ENCODE measurements at regions of chr10 and their contacts with region 1.

Region 1: GRCh38 chr10:88791924-88792323 is 10.6 kb upstream of the LIPM start:
- DNase-seq: no peak
- H3K4me3 Mint-ChIP-seq: no peak overlapping the region
- H3K27ac Mint-ChIP-seq: no peak overlapping the region
- H3K4me1 Mint-ChIP-seq: peaks cover 25% of the 10 kb centered on the region
- H3K27me3 Mint-ChIP-seq: peaks cover 16% of the 10 kb centered on the region

Region 2: GRCh38 chr10:88707429-88708285 is 84.3 kb before region 1 on chr10:
- intact Hi-C with region 1: loop called (anchors 5 kb)
- DNase-seq: no peak
- H3K4me3 Mint-ChIP-seq: no peak overlapping the region
- H3K27ac Mint-ChIP-seq: no peak overlapping the region
- H3K4me1 Mint-ChIP-seq: peaks cover 17% of the 10 kb centered on the region
- H3K27me3 Mint-ChIP-seq: peaks cover 27% of the 10 kb centered on the region

Region 3: DNA sequence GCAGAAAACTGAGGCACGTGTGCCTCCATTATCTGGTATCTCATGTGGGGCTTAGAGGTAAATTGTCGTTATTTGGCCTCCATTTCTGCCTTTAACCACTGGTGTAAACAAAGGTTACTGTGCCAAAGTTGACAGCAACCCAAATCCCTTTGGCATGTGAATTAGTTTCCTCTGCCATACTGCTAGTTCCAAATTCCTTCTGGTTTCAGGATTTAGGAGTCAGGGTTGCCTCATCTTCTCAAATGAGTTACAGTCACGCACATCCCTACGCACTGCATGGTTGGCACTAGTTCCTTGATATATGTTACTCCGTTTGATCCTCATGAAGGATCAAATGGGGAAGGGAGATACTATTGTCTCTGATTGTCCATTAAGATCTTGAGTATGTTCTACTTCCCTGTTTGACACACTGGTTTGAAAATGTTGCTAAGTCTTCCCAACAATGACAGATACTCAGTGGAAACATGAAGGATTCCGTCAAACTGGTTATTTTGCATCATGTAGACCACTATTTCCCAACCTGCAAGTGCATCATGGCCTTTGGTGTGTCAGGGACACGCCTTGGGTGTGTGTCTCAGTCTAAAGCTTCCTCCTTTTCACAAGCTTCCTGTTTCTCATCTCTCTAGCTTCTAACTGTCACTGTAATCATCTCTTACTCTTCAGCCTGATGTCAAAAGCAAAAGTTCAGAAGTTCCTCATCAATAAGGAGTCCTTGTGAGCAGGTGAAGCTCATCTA is 32.4 kb before region 1 on chr10 and contains the start of gene LIPN:
- intact Hi-C with region 1: loop called (anchors 5 kb)
- DNase-seq: no peak
- H3K4me3 Mint-ChIP-seq: no peak within 1 kb of the TSS
- H3K27ac Mint-ChIP-seq: no peak within 1 kb of the TSS
- H3K4me1 Mint-ChIP-seq: peaks cover 6% of the 10 kb centered on the region
- H3K27me3 Mint-ChIP-seq: peaks cover 20% of the 10 kb centered on the region
- total RNA-seq, gene LIPN: not detected in 2 replicates

Region 4: DNA sequence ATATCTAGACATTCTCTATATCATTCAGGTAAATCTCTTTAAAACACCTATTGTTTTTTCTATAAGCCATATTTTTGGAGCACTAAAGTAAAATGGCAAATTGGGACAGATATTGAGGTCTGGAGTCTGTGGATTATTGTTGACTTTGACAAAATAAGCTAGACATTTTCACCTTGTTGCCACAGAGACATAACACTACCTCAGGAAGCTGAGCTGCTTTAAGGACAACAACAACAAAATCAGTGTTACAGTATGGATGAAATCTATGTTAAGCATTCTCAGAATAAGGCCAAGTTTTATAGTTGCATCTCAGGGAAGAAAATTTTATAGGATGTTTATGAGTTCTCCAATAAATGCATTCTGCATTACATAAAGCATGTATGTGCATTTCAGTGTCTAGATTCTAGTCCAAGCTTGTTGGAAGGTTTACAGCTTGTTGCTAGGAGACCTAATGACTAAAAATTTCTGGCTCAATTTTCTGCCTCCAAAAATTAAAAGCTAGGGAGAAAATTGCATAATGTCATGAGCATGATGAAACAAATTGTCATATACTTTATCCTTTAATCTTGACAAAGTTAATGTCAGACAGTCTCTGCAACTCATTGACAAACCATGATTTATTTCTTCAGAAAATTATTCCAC is 28.9 kb after region 1 on chr10:
- intact Hi-C with region 1: loop called (anchors 1 kb)
- DNase-seq: no peak
- H3K4me3 Mint-ChIP-seq: no peak overlapping the region
- H3K27ac Mint-ChIP-seq: no peak overlapping the region
- H3K4me1 Mint-ChIP-seq: peaks cover 51% of the 10 kb centered on the region
- H3K27me3 Mint-ChIP-seq: peaks cover 7% of the 10 kb centered on the region

Region 5: DNA sequence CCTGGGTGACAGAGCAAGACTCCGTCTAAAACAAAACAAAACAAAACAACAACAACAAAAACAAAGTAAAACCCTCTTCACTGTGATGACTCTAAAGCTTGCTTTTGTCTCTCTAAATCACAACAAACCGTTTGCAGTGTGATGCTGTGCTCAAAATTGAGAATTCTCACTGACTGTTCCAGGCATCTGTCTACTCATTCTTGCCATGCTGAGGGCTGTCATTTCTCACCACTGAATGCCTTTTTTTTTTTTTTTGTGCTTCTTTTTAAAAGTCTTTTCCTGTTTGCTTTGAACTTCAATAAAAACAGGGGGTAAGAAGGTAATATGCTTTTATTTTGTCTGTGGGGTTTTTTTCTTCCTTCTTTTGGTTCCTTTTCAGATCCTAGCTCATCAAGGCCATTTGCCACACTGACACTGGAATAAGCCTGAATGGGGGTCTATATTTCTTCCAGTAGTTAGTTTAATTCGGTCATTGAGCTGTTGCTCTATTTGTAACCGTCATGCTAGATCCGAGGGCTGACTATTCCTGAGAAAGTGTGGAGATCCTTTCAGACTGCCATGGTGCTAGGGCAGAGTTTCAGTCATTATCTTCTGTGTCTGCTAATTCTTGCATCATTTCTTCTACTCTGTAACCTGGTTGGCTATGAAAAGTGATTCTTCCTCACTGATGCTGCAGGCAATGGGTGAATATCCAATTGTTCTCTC is 209.3 kb after region 1 on chr10:
- intact Hi-C with region 1: loop called (anchors 5 kb)
- DNase-seq: no peak
- H3K4me3 Mint-ChIP-seq: peak overlapping the region; percentile 37
- H3K27ac Mint-ChIP-seq: peak overlapping the region; percentile 81
- H3K4me1 Mint-ChIP-seq: peaks cover 76% of the 10 kb centered on the region
- H3K27me3 Mint-ChIP-seq: no peaks in the 10 kb centered on the region

Measured in activated T-helper 1 cell treated with anti-CD3 and anti-CD28 coated beads, Interleukin-12 subunit alpha, Interleukin-12 subunit beta, Interleukin-2, Interleukin-4 antibody, amounts not matched to agents 30 ng/mL and 10 ng/mL and 1 ng/mL, durations not matched to agents 14 hours and 24 hours and 36 hours (primary cell).